Upper lobe of right lung (tissue), 1 donor: ENCODE measurements at regions of chr19 and their contacts with region 1.

Region 1: GRCh38 chr19:11288343-11288742 is 7.6 kb upstream of the TSPAN16 start:
- DNase-seq: no peak
- ATAC-seq: peak; percentile 52
- H3K4me3 ChIP-seq: no peak overlapping the region
- H3K27ac ChIP-seq: no peak overlapping the region
- H3K4me1 ChIP-seq: peaks cover 12% of the 10 kb centered on the region
- H3K27me3 ChIP-seq: no peaks in the 10 kb centered on the region
- CTCF ChIP-seq: peak; percentile 50

Region 2: DNA sequence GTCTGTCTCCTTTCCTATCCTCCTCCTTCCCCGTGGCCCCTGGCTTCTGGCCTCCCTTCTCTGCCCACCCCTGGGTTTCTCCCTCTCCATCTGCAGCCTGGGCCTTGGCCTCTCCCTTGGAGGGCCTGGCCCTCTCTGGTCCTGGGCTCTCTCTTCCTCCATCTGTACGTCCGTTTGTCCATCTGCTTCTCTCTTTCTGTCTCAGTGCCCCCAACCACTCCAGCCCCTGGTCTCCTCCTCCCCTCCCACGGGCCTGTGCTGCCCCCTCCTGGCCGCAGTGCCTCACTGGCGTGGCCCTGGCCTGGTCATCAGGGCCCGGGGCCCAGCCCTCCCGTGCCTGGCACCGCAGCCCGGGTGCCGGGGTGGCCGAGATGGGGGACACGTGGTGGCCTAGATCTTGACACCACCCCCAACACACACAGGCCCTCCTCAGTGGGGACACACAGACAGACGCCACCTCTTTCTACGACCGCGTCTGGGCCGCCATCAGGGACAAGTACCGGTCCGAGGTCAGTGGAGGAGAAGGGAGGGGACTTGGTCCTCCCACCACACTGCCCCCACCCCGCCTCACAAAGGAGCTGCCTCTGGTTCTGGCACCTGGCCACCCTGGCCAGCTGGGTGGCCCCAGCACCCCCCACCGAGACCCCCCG is 158.4 kb after region 1 on chr19:
- intact Hi-C with region 1: loop called (anchors 10 kb)
- DNase-seq: peak; percentile 82
- ATAC-seq: peak; percentile 81
- H3K4me3 ChIP-seq: no peak overlapping the region
- H3K27ac ChIP-seq: no peak overlapping the region
- H3K4me1 ChIP-seq: no peaks in the 10 kb centered on the region
- H3K27me3 ChIP-seq: no peaks in the 10 kb centered on the region
- CTCF ChIP-seq: peak; percentile 71